ENCODE measurements at regions of chr4 and their contacts with region 1.

Region 1: DNA sequence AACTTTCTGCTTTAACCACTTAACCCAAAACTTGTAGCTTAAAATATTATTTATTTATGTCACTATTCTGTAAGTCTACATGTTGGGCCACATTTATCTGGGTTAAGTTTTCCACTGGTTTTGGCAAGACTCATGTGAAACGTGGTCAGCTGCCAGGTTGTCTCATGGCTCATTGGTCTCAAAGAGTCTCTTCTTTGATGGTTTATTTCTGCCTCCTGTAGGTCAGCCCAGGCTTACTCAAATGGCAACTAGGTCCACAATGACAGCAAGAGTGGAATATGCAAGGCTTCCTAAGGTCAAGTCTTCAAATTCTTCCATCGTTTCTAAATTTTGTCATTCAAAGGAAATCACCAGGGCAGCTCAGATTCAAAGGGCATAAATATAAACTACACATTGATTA is 828.7 kb downstream of the PCDH7 start:
- DNase-seq: no peak
- ATAC-seq: no peak
- H3K4me3 ChIP-seq: no peak overlapping the region
- H3K27ac ChIP-seq: no peak overlapping the region
- H3K4me1 ChIP-seq: no peaks in the 10 kb centered on the region
- H3K27me3 ChIP-seq: no peaks in the 10 kb centered on the region
- CTCF ChIP-seq: no peak

Region 2: GRCh38 chr4:31530555-31530954 is 18.3 kb before region 1 on chr4:
- CTCF ChIA-PET with region 1: no interaction called
- POLR2A ChIA-PET with region 1: no interaction called
- in situ Hi-C with region 1: no loop called
- intact Hi-C with region 1: loop called (anchors 1 kb)
- DNase-seq: no peak
- ATAC-seq: no peak
- H3K4me3 ChIP-seq: no peak overlapping the region
- H3K27ac ChIP-seq: no peak overlapping the region
- H3K4me1 ChIP-seq: no peaks in the 10 kb centered on the region
- H3K27me3 ChIP-seq: no peaks in the 10 kb centered on the region
- CTCF ChIP-seq: no peak

Region 3: GRCh38 chr4:31715302-31715701 is 166.5 kb after region 1 on chr4:
- CTCF ChIA-PET with region 1: no interaction called
- POLR2A ChIA-PET with region 1: no interaction called
- in situ Hi-C with region 1: no loop called
- intact Hi-C with region 1: no loop called
- DNase-seq: no peak
- ATAC-seq: no peak
- H3K4me3 ChIP-seq: no peak overlapping the region
- H3K27ac ChIP-seq: no peak overlapping the region
- H3K4me1 ChIP-seq: no peaks in the 10 kb centered on the region
- H3K27me3 ChIP-seq: no peaks in the 10 kb centered on the region
- CTCF ChIP-seq: no peak